ENCODE measurements at regions of chr15 and their contacts with region 1.

Region 1: GRCh38 chr15:34969340-34970097 is at the start of gene AQR:
- DNase-seq: peak; percentile 92 to 96
- ATAC-seq: peak; percentile 99 to 100 (median 100)
- H3K4me3 ChIP-seq: peak within 1 kb of the TSS; percentile 62 to 100 (median 81)
- H3K27ac ChIP-seq: peak within 1 kb of the TSS; percentile 8 to 91 (median 86)
- H3K4me1 ChIP-seq: peaks cover 0 to 56% (median 34%) of the 10 kb centered on the region in 9 donors
- H3K27me3 ChIP-seq: no peaks in the 10 kb centered on the region
- CTCF ChIP-seq: peak; percentile 60 to 97 (median 82)
- total RNA-seq, gene AQR: 9.4 to 14.6 (median 10.8) TPM

Region 2: GRCh38 chr15:34693053-34693744 is 276.3 kb before region 1 on chr15:
- intact Hi-C with region 1: no loop called
- DNase-seq: no peak
- ATAC-seq: no peak
- H3K4me3 ChIP-seq: no peak overlapping the region
- H3K27ac ChIP-seq: no peak overlapping the region
- H3K4me1 ChIP-seq: peaks cover 0 to 4% (median 0%) of the 10 kb centered on the region in 9 donors
- H3K27me3 ChIP-seq: no peaks in the 10 kb centered on the region
- CTCF ChIP-seq: no peak

Region 3: DNA sequence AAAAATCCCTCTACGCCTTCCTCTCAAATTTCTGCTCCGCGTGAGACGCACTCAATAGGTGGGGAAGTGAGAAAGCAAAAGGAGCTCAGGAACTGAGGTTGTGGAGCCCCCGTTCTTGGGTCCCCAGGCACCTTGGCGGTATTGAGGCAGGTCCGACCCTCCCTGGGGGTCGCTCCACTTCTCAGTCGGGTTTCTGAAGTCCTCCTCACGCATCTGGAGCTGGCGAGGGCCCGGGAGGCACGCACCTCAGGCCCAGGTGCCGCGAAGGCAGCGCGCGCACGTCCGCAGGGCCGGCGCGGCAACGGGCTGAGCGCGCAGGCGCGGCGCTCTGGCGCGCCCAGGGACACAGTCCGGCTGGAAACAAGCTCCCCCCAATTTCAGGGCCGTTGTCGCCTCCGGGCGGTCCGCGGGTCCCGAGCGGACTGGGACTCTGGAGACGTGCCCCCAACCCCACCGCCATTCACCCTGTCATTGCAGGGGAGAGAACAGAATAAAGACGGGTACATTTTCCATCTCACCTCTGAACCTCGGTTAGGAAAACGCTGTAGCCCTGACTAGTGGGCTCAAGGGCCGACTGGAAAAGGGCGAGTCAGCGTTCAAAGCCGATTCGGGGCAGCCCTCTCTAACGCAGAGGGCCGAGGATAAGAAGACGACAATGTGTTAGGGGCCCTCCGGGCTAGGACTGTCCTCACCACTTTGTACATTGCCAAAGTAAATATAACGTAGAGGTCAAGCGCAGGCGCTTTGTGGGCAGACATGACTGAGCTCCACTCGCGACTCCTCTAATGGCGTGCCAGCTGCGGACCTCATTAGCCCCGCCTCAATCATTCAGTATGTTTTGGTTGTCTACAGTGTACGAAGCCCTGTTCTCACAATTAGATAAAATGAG is 18.7 kb after region 1 on chr15 and contains the start of gene ZNF770:
- intact Hi-C with region 1: loop called in 4 of 10 experiments (anchors 1 to 2 kb)
- DNase-seq: peak; percentile 78 to 81
- ATAC-seq: peak; percentile 92 to 97 (median 94)
- H3K4me3 ChIP-seq: peak within 1 kb of the TSS; percentile 54 to 98 (median 89)
- H3K27ac ChIP-seq: peak within 1 kb of the TSS; percentile 96 to 100 (median 98)
- H3K4me1 ChIP-seq: peaks cover 7 to 48% (median 40%) of the 10 kb centered on the region in 9 donors
- H3K27me3 ChIP-seq: no peaks in the 10 kb centered on the region
- CTCF ChIP-seq: peak in 1 of 9 donors; percentile 21
- total RNA-seq, gene ZNF770: 27.3 to 52.7 (median 40.5) TPM

Measured in heart right ventricle (tissue), 16 donors.